ENCODE measurements at regions of chr2 and their contacts with region 1.

Region 1: DNA sequence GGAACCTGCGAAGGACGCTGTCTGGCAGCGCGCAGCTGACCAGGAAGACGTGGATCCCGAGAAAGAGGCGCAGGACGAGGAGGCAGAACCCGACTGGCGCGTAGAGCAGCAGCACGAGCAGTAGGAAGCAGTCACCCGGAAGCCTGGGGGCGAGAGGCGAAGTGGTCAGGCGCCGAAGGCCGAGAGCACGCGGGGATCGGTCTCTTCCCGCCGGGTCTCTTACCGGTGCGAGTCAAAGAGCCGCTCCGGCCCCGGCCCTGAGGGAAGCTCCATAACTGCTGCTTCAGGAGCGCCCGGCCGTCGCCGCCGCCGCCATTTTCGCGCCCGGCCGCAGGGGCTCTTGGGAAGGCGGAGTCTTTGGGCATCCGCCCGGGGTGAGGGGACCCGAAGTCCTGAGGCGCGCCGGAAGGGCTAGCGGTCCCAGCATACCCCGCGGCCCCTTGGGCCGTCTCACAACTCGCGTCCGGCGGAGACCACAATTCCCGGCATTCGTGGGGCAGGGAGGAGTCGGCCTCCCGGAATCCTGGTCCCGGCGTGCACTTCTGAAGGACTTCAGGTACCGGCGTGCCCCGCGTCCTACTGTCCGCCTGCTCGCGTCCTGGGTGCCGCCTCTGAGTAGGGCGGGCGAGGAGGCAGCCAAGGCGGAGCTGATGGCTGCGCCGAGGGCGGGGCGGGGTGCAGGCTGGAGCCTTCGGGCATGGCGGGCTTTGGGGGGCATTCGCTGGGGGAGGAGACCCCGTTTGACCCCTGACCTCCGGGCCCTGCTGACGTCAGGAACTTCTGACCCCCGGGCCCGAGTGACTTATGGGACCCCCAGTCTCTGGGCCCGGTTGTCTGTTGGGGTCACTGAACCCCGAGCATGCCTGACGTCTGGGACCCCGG is at the starts of genes AUP1 and HTRA2:
- DNase-seq: peak; percentile 90
- H3K4me3 Mint-ChIP-seq: peak within 1 kb of the TSS; percentile 99
- H3K27ac Mint-ChIP-seq: peak within 1 kb of the TSS; percentile 95
- H3K4me1 Mint-ChIP-seq: peaks cover 49% of the 10 kb centered on the region
- H3K27me3 Mint-ChIP-seq: no peaks in the 10 kb centered on the region
- total RNA-seq, gene AUP1: 178 and 187 TPM in 2 replicates
- total RNA-seq, gene HTRA2: 57.0 and 57.3 TPM in 2 replicates

Region 2: GRCh38 chr2:74250189-74250631 is 279.4 kb before region 1 on chr2:
- intact Hi-C with region 1: loop called (anchors 1 kb)
- DNase-seq: peak; percentile 23
- H3K4me3 Mint-ChIP-seq: no peak overlapping the region
- H3K27ac Mint-ChIP-seq: no peak overlapping the region
- H3K4me1 Mint-ChIP-seq: no peaks in the 10 kb centered on the region
- H3K27me3 Mint-ChIP-seq: peaks cover 7% of the 10 kb centered on the region

Region 3: DNA sequence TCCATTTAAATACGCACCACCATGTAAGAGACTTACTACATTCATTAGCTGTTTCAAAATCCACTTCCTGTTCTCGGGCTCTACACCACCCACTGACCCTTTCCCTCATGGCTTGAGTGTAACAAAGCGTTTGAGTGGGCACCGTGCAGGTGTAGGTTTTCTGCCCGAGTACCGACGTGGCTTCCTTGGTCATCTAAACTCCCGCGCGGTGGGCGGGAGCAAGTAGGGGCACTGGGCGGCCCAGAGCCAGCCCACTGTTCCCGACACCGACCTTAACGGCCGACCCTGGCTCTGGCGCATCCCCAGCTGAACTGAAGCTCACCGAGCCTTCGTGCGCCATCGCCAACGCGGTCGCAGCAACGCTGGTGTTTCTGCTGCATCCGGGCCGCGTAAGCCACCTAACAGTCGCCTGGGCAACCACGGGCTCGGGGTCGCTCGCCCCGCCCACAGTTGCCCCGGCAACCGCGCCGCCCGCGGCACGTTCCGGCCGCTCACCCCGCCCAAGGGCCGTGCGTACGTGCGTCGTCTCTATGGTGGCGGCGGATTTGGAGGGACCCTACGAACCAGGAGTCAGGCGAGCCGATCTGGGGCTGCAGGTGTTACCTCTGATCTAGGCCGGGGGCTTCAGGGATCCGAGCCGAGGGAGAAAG is 108.3 kb before region 1 on chr2 and contains the starts of genes C2orf81 and WDR54:
- intact Hi-C with region 1: loop called (anchors 1 kb)
- DNase-seq: peak; percentile 95
- H3K4me3 Mint-ChIP-seq: peak within 1 kb of the TSS; percentile 98
- H3K27ac Mint-ChIP-seq: peak within 1 kb of the TSS; percentile 99
- H3K4me1 Mint-ChIP-seq: peaks cover 35% of the 10 kb centered on the region
- H3K27me3 Mint-ChIP-seq: no peaks in the 10 kb centered on the region
- total RNA-seq, gene C2orf81: 1.9 and 2.4 TPM in 2 replicates
- total RNA-seq, gene WDR54: 56.4 and 58.6 TPM in 2 replicates

Region 4: DNA sequence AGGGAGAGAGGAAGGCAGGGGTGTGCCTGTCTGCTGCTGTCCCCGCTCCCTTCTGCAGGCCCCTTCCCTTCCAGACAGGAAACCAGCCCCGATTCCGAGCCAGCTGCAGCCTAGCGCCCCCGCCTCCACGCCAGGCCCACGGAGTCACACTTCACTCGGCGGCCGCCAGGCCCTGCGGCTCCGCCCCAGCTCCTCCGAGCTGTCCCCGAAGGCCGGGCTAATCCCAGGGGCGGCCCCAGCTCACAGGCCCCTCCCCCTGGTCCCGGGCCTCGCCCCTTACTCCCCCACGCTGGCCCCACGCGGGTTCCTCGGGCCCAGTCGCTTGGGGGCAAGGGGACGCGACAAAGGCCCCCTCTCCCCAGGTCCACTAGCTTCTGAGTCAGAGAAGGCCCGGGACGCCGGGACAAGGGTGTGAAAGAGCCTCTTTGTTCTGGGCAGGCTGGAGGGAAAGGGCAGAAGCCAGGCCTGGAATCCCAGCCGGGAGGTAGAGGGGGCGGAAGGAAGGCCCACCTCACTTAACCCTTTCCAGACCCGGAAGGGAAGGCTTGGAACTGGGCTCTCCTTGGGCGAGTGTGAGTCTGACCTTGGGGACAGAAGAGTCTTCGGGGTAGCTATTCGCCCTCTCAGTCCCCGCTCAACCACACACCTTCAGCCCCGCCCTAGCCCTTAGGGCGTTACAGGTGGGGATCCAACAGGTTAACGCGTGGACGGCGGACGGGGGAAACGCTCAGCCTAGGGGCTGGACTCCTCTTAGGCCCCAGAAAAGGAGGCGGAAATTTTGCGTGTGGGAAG is 89.0 kb before region 1 on chr2:
- intact Hi-C with region 1: no loop called
- DNase-seq: peak; percentile 37
- H3K4me3 Mint-ChIP-seq: peak overlapping the region; percentile 73
- H3K27ac Mint-ChIP-seq: no peak overlapping the region
- H3K4me1 Mint-ChIP-seq: peaks cover 22% of the 10 kb centered on the region
- H3K27me3 Mint-ChIP-seq: peaks cover 36% of the 10 kb centered on the region

Region 5: GRCh38 chr2:74498500-74499266 is 30.9 kb before region 1 on chr2:
- intact Hi-C with region 1: loop called (anchors 1 kb)
- DNase-seq: no peak
- H3K4me3 Mint-ChIP-seq: peak overlapping the region; percentile 93
- H3K27ac Mint-ChIP-seq: peak overlapping the region; percentile 85
- H3K4me1 Mint-ChIP-seq: peaks cover 48% of the 10 kb centered on the region
- H3K27me3 Mint-ChIP-seq: peaks cover 44% of the 10 kb centered on the region

Region 6: GRCh38 chr2:74553892-74554645 is 24.5 kb after region 1 on chr2 and contains the start of gene LOXL3:
- intact Hi-C with region 1: loop called (anchors 1 kb)
- DNase-seq: peak; percentile 77
- H3K4me3 Mint-ChIP-seq: peak within 1 kb of the TSS; percentile 95
- H3K27ac Mint-ChIP-seq: peak within 1 kb of the TSS; percentile 96
- H3K4me1 Mint-ChIP-seq: peaks cover 33% of the 10 kb centered on the region
- H3K27me3 Mint-ChIP-seq: peaks cover 11% of the 10 kb centered on the region
- total RNA-seq, gene LOXL3: 1.9 and 2.0 TPM in 2 replicates

Region 7: GRCh38 chr2:74886811-74887210 is 357.2 kb after region 1 on chr2:
- intact Hi-C with region 1: no loop called
- DNase-seq: no peak
- H3K4me3 Mint-ChIP-seq: no peak overlapping the region
- H3K27ac Mint-ChIP-seq: no peak overlapping the region
- H3K4me1 Mint-ChIP-seq: no peaks in the 10 kb centered on the region
- H3K27me3 Mint-ChIP-seq: no peaks in the 10 kb centered on the region

Region 8: DNA sequence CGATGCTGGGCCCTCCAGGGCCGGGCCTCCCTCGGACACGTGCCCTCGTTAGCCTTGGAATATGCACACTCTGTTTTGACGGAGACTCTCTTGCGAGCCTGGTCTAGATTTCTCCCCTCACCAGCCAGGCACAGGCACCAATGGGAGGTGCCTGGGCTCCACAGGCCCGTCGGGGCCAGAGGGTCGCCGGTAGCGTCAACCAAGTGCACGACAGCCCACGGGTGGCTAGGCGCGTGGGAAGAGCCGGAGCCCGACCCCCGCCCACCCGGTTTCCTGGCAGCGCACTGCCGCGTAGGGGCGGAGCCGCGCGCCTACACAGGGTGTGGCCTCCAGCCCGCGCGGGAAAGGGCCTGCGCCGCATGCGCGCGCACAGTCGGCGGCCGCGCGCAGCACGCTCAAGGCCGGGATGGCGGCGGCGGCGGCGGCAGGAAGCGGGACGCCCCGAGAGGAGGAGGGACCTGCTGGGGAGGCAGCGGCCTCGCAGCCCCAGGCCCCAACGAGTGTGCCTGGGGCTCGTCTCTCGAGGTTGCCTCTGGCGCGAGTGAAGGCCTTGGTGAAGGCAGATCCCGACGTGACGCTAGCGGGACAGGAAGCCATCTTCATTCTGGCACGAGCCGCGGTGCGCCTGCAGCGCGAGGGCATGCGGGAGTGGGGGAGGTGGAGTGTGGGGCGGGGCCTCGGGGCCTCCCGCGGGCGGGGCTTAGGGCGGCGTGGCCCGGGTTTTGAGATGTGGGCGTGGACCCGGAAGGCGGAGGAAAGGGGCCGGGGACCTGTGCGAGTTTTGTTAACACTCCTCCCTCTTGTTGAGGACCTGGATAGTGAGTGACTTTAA is 428.9 kb after region 1 on chr2 and contains the start of gene POLE4:
- intact Hi-C with region 1: loop called (anchors 2 kb)
- DNase-seq: peak; percentile 89
- H3K4me3 Mint-ChIP-seq: peak within 1 kb of the TSS; percentile 85
- H3K27ac Mint-ChIP-seq: peak within 1 kb of the TSS; percentile 89
- H3K4me1 Mint-ChIP-seq: peaks cover 66% of the 10 kb centered on the region
- H3K27me3 Mint-ChIP-seq: no peaks in the 10 kb centered on the region
- total RNA-seq, gene POLE4: 48.4 and 56.7 TPM in 2 replicates

Measured in activated T-helper 1 cell treated with anti-CD3 and anti-CD28 coated beads, Interleukin-12 subunit alpha, Interleukin-12 subunit beta, Interleukin-2, Interleukin-4 antibody, amounts not matched to agents 30 ng/mL and 10 ng/mL and 1 ng/mL, durations not matched to agents 14 hours and 24 hours and 36 hours (primary cell).